Activated CD4-positive, alpha-beta memory T cell treated with anti-CD3 and anti-CD28 coated beads, Interleukin-2, amount 10 ng/mL, durations not matched to agents 7 days and 5 days (primary cell): ENCODE measurements at regions of chr1 and their contacts with region 1.

Region 1: DNA sequence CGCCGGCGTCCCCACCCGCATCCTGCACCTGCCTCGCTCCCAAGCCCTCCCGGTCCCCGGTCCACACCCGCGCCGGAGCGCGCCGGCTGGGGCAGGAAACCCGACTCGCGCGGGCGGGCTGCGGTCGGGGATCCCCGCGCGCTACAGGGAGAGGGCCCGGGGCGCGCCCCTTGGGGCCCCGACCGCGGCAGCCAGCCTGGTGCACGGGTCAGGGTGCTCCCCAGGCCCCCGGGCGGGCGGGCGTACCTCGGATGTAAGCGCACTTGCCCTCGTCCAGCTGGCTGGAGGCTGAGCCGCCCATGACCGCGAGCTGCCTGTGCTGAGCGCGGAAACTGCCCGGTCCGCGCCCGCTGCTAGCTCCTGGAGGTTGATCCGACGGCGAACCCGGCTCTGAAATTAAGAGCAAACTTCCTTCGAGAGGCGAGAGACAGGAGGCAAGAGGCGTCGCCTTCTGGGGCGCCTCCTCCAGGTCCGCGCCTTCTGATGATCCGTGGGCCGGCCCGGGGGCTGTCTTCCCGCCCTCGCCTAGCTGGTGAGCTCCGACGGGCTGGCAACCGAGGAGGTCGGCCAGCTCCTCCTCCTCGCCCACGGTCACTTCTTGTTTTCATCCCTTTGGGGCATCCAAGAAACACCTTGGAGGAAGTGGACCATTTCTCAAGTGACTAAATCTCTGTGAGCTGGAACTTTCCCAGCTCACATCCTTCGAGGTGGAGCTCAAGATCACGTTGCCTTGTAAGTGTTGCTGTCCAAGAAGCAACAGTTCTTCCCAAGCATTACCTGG is at the start of gene NIBAN1:
- DNase-seq: peak; percentile 76
- H3K4me3 Mint-ChIP-seq: peak within 1 kb of the TSS; percentile 90
- H3K27ac Mint-ChIP-seq: peak within 1 kb of the TSS; percentile 87
- H3K4me1 Mint-ChIP-seq: peaks cover 55% of the 10 kb centered on the region
- H3K27me3 Mint-ChIP-seq: peaks cover 3% of the 10 kb centered on the region
- total RNA-seq, gene NIBAN1: 68.8 to 71.7 TPM

Region 2: DNA sequence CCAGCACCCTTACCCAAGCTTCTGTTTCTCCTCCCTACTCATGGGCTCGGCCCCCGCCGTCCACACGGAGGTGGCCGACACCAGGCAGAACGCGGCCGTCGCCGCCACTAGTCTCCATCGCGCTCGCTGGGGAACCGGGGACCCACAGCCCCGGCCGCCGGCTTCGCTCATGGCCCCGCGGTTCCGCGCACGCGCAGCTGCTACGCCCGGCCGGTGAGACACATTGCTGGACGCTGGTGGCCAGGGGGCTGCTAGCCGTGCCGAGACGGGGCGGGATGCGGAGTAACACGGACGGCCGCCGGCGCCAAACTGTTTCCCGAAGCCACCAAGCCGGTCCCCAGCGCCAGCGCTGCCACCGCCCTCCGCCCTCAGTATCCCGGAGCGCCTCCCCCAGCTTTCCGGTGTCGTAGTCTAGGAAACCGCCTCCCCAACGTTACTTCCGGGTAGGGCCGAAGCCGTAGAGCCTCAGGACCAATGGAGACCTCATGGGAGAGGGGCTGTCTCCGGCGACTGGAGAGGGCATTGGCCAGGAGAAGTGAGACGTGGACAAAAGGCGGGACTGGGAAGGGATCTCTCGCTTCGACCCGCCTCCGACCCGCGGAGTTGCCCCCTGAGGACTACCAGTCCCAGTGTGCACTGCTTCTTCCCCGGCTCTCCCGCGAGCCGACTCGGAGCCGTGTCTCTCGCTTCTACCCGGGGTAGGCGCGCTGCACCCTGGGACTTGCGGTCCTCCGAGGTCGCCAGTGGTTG is 219.6 kb before region 1 on chr1 and contains the start of gene EDEM3:
- CTCF ChIA-PET with region 1: interaction called, 4 read pairs
- POLR2A ChIA-PET with region 1: interaction called, 75 read pairs
- DNase-seq: peak; percentile 98
- H3K4me3 Mint-ChIP-seq: peak within 1 kb of the TSS; percentile 88
- H3K27ac Mint-ChIP-seq: peak within 1 kb of the TSS; percentile 77
- H3K4me1 Mint-ChIP-seq: peaks cover 51% of the 10 kb centered on the region
- H3K27me3 Mint-ChIP-seq: peaks cover 2% of the 10 kb centered on the region
- total RNA-seq, gene EDEM3: 39.3 to 42.9 TPM

Region 3: GRCh38 chr1:184813528-184814089 is 160.6 kb before region 1 on chr1:
- CTCF ChIA-PET with region 1: interaction called, 88 read pairs
- POLR2A ChIA-PET with region 1: interaction called, 11 read pairs
- DNase-seq: no peak
- H3K4me3 Mint-ChIP-seq: no peak overlapping the region
- H3K27ac Mint-ChIP-seq: no peak overlapping the region
- H3K4me1 Mint-ChIP-seq: no peaks in the 10 kb centered on the region
- H3K27me3 Mint-ChIP-seq: no peaks in the 10 kb centered on the region

Region 4: DNA sequence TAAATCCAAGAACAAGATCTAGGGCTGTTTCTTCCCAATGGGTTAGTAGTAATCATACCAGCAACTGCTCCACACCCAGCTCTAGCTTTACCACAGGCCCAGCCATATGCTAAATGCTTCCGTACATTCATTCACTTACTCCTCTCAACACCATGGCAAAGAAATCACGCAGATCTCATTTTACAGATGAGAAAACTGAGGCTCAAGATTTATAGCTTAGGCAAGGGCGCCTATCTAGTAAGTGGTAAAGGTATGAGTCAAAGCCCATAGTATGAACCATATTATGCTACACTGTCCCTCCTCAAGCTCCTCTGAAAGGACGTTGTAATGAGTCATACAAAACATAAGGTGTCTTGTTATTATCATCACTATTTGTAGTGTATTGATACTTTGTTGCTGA is 82.1 kb before region 1 on chr1:
- CTCF ChIA-PET with region 1: interaction called, 7 read pairs
- POLR2A ChIA-PET with region 1: interaction called, 25 read pairs
- DNase-seq: peak; percentile 42
- H3K4me3 Mint-ChIP-seq: peak overlapping the region; percentile 6
- H3K27ac Mint-ChIP-seq: peak overlapping the region; percentile 82
- H3K4me1 Mint-ChIP-seq: peaks cover 61% of the 10 kb centered on the region
- H3K27me3 Mint-ChIP-seq: no peaks in the 10 kb centered on the region

Region 5: GRCh38 chr1:185156854-185157598 is 182.8 kb after region 1 on chr1 and contains the starts of genes SWT1 and TRMT1L:
- CTCF ChIA-PET with region 1: no interaction called
- POLR2A ChIA-PET with region 1: interaction called, 13 read pairs
- DNase-seq: peak; percentile 99
- H3K4me3 Mint-ChIP-seq: peak within 1 kb of the TSS; percentile 88
- H3K27ac Mint-ChIP-seq: peak within 1 kb of the TSS; percentile 95
- H3K4me1 Mint-ChIP-seq: peaks cover 63% of the 10 kb centered on the region
- H3K27me3 Mint-ChIP-seq: no peaks in the 10 kb centered on the region
- total RNA-seq, gene SWT1: 4.8 to 5.0 TPM
- total RNA-seq, gene TRMT1L: 29.8 to 35.8 TPM

Region 6: GRCh38 chr1:185213091-185213490 is 238.8 kb after region 1 on chr1:
- CTCF ChIA-PET with region 1: no interaction called
- POLR2A ChIA-PET with region 1: no interaction called
- DNase-seq: no peak
- H3K4me3 Mint-ChIP-seq: no peak overlapping the region
- H3K27ac Mint-ChIP-seq: no peak overlapping the region
- H3K4me1 Mint-ChIP-seq: no peaks in the 10 kb centered on the region
- H3K27me3 Mint-ChIP-seq: no peaks in the 10 kb centered on the region